ENCODE measurements at regions of chr11 and their contacts with region 1.

Region 1: DNA sequence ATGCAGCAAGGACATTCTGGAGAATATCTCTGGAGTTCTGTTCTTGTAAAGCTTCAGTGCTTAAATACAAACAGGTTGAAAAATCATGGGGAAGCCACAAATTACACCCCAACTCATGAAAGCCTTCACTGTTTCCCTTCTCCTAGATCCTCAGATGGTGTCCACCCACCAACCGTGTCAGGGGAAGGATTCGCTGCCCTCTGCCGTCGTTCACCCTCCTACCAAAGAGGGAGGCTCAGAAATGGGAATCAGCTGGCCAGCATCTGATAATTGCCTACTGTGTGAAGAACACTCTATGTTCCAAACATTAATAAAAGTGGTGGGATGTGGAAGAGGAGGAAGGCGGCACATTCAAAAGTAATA is 7.4 kb upstream of the HEPACAM start:
- DNase-seq: no peak
- H3K4me3 ChIP-seq: no peak overlapping the region
- H3K27ac ChIP-seq: no peak overlapping the region
- H3K4me1 ChIP-seq: no peaks in the 10 kb centered on the region
- H3K27me3 ChIP-seq: no peaks in the 10 kb centered on the region
- CTCF ChIP-seq: peak in 1 of 2 donors; percentile 5
- POLR2A ChIP-seq: no peak

Region 2: GRCh38 chr11:124891373-124891861 is 51.8 kb before region 1 on chr11:
- CTCF ChIA-PET with region 1: interaction called, 10 read pairs
- POLR2A ChIA-PET with region 1: no interaction called
- dilution Hi-C with region 1: no loop called
- intact Hi-C with region 1: no loop called
- DNase-seq: no peak
- H3K4me3 ChIP-seq: no peak overlapping the region
- H3K27ac ChIP-seq: no peak overlapping the region
- H3K4me1 ChIP-seq: peaks cover 85% of the 10 kb centered on the region
- H3K27me3 ChIP-seq: no peaks in the 10 kb centered on the region
- CTCF ChIP-seq: no peak
- POLR2A ChIP-seq: no peak